ENCODE measurements at regions of chr12 and their contacts with region 1.

Region 1: DNA sequence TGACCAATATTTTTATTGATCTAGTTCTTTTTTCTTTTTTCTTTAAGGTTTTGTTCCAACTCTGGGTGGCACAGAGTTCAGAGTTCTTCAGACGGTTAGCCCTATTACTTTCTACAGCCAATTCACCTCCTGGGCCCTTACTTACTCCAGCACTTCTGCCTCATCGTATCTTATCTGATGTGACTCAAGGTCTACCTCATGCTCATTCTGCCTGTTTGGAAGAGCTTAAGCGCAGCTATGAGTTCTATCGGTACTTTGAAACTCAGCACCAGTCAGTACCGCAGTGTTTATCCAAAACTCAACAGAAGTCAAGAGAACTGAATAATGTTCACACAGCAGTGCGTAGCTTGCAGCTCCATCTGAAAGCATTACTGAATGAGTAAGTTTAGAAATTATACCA is 64.7 kb downstream of the VEZT start:
- DNase-seq: no peak
- ATAC-seq: no peak

Region 2: GRCh38 chr12:94909663-94910062 is 372.6 kb before region 1 on chr12:
- intact Hi-C with region 1: loop called (anchors 5 kb)
- DNase-seq: no peak
- ATAC-seq: peak; percentile 96

Region 3: GRCh38 chr12:95385246-95386035 is 103.2 kb after region 1 on chr12:
- intact Hi-C with region 1: no loop called
- DNase-seq: no peak
- ATAC-seq: peak; percentile 93

Measured in sciatic nerve (tissue), 2 donors.